K562 (cell line): ENCODE measurements at regions of chr18 and their contacts with region 1.

Region 1: DNA sequence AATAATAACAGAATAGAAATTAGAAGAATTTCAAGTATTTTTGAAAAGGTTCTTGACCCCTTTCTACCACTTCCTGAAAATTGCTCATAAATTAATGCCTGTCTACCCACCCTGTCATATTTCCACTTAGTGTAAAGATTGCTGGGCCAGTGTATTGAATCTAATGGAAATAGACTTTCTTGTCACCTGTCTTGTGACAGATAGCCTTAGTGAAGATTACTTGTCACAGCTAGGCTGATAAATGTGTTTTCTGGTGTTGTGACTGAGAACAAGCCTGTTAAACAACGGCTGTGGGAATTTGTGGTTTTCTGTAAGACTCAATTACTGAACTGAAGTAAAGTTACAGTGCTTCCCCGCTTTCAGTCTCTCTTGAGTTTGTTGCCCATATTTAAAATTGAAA is 37.0 kb downstream of the PIK3C3 start:
- DNase-seq: peak in 1 of 4 experiments; percentile 23
- ATAC-seq: peak; percentile 67
- H3K4me3 ChIP-seq: no peak overlapping the region
- H3K27ac ChIP-seq: peak overlapping the region; percentile 14; the same call in 1 of the 3 replicates
- H3K4me1 ChIP-seq: 0 out of 5 replicates have a peak, but pooled peaks cover 0 to 2% of the 10 kb centered on the region in 2 experiments
- H3K27me3 ChIP-seq: no peaks in the 10 kb centered on the region
- CTCF ChIP-seq: no peak
- EP300 ChIP-seq: 0 out of 2 replicates have a peak, but pooled peaks have one; percentile 3
- POLR2A ChIP-seq: no peak
- RAD21 ChIP-seq: no peak

Region 2: DNA sequence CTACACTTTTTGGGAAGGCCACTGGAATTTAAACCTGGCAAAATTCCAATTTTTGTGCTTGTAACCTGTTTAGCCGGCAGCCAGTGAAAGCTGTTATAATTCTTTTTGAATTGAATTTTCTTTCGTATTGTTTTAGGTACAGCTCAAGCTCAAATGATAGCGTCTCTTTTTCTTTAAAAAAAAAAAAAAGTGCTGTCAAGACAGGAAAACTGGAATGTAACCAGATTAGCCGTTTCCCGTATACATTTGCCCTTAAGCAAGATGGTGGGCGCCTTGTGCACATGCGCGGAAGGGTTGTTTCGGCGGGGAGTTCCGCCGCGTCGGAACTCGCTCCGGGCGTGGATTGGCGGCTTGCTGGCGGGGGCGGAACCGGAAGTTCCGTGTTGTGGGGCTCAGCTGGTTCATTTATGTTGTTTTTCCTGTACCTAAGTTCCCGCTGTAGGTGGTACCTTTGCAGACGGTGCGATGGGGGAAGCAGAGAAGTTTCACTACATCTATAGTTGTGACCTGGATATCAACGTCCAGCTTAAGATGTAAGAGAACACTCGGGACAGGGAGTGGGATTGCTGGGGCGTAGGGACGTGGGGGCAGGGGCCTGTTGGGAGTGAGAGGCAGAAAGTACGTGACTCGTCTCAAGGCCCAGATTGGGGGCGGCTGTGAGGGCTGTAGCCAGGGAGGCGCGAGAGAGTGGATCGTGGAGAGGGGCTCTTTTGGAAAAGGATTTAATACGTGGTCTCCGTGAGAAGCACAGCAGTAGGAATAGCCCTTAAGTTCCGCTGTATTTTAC is 37.0 kb before region 1 on chr18 and contains the start of gene PIK3C3:
- CTCF ChIA-PET with region 1: no interaction called
- POLR2A ChIA-PET with region 1: no interaction called
- in situ Hi-C with region 1: no loop called
- intact Hi-C with region 1: loop called (anchors 5 kb)
- DNase-seq: peak; percentile 96 to 100 (median 98)
- ATAC-seq: peak; percentile 95
- H3K4me3 ChIP-seq: peak within 1 kb of the TSS; percentile 66
- H3K27ac ChIP-seq: peak within 1 kb of the TSS; percentile 64
- H3K4me1 ChIP-seq: no peaks in the 10 kb centered on the region; a peak in 1 of 5 replicates
- H3K27me3 ChIP-seq: no peaks in the 10 kb centered on the region
- CTCF ChIP-seq: no peak
- EP300 ChIP-seq: no peak
- POLR2A ChIP-seq: peak; percentile 85
- RAD21 ChIP-seq: no peak
- polyA plus RNA-seq, gene PIK3C3: 42.0 to 56.3 TPM